SK-N-SH (cell line): ENCODE measurements at regions of chr7 and their contacts with region 1.

Region 1: GRCh38 chr7:54758702-54759592 is at the start of gene SEC61G:
- DNase-seq: peak; percentile 98
- H3K4me3 ChIP-seq: peak within 1 kb of the TSS; percentile 84 to 100
- H3K27ac ChIP-seq: peak within 1 kb of the TSS; percentile 82 to 97
- H3K4me1 ChIP-seq: peaks cover 7 to 15% of the 10 kb centered on the region in 2 experiments; a peak in 3 of 4 replicates
- H3K27me3 ChIP-seq: no peaks in the 10 kb centered on the region
- CTCF ChIP-seq: no peak
- EP300 ChIP-seq: no peak
- RAD21 ChIP-seq: no peak
- polyA plus RNA-seq, gene SEC61G: 229 and 314 TPM in 2 replicates

Region 2: GRCh38 chr7:54729107-54729506 is 29.8 kb before region 1 on chr7:
- CTCF ChIA-PET with region 1: no interaction called
- POLR2A ChIA-PET with region 1: no interaction called
- DNase-seq: no peak
- H3K4me3 ChIP-seq: no peak overlapping the region
- H3K27ac ChIP-seq: no peak overlapping the region
- H3K4me1 ChIP-seq: no peaks in the 10 kb centered on the region
- H3K27me3 ChIP-seq: no peaks in the 10 kb centered on the region
- CTCF ChIP-seq: no peak
- EP300 ChIP-seq: no peak
- RAD21 ChIP-seq: no peak

Region 3: GRCh38 chr7:55365675-55366460 is 606.9 kb after region 1 on chr7:
- CTCF ChIA-PET with region 1: no interaction called
- POLR2A ChIA-PET with region 1: interaction called, 19 read pairs
- DNase-seq: peak; percentile 98
- H3K4me3 ChIP-seq: peak overlapping the region; percentile 66 to 95
- H3K27ac ChIP-seq: peak overlapping the region in 1 of 2 experiments; percentile 99; a peak in 3 of 4 replicates
- H3K4me1 ChIP-seq: peaks cover 20 to 23% of the 10 kb centered on the region in 2 experiments
- H3K27me3 ChIP-seq: no peaks in the 10 kb centered on the region
- CTCF ChIP-seq: peak; percentile 43
- EP300 ChIP-seq: peak in 1 of 2 experiments; percentile 72; a peak in 1 of 4 replicates
- RAD21 ChIP-seq: 0 out of 2 replicates have a peak, but pooled peaks have one; percentile 25